ENCODE measurements at regions of chr1 and their contacts with region 1.

Region 1: DNA sequence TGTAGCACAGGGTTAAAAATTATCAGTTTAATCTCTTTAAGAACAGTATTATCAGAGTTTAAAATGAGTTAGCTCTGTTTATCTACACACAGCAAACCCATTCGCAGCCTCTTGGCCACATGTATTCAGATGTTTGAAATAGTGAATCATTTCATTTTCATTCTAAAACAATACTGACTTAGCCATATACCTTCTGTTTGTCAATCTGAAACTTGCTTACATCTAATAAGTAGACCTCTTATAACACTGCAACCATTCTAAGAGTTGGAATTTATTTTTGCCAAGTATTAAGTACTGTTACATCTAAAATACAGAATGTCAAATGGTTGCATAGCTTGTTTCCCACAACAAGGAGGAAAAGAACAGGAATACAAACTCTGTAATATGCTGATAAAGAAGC is 25.4 kb downstream of the ANGEL2 start:
- DNase-seq: no peak
- ATAC-seq: no peak
- H3K4me3 Mint-ChIP-seq: no peak overlapping the region
- H3K27ac Mint-ChIP-seq: no peak overlapping the region
- H3K4me1 Mint-ChIP-seq: peaks cover 8% of the 10 kb centered on the region
- H3K27me3 Mint-ChIP-seq: no peaks in the 10 kb centered on the region

Region 2: GRCh38 chr1:212814537-212815334 is 175.5 kb before region 1 on chr1:
- CTCF ChIA-PET with region 1: interaction called, 17 read pairs
- POLR2A ChIA-PET with region 1: no interaction called
- intact Hi-C with region 1: loop called (anchors 1 to 2 kb)
- DNase-seq: peak; percentile 10
- ATAC-seq: no peak
- H3K4me3 Mint-ChIP-seq: no peak overlapping the region
- H3K27ac Mint-ChIP-seq: no peak overlapping the region
- H3K4me1 Mint-ChIP-seq: peaks cover 3% of the 10 kb centered on the region
- H3K27me3 Mint-ChIP-seq: no peaks in the 10 kb centered on the region

Region 3: DNA sequence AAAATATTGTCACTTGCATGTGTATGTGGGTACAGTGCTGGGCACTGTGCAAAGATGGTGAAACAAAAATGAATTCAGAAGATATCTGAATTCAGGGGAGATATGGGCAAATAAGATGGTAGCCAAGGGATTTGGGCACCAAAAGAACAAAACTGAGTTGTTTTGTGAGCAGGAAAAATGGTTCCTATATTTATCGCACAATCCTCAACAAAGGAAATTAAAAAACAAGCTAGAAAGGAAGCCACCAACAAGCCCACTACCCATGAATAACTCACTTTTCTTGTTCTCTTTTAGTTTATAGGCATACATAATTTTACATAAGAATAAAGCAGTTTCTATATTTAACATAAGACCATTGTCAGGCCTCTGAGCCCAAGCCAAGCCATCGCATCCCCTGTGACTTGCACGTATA is 80.6 kb before region 1 on chr1:
- CTCF ChIA-PET with region 1: no interaction called
- POLR2A ChIA-PET with region 1: no interaction called
- intact Hi-C with region 1: no loop called
- DNase-seq: no peak
- ATAC-seq: no peak
- H3K4me3 Mint-ChIP-seq: no peak overlapping the region
- H3K27ac Mint-ChIP-seq: no peak overlapping the region
- H3K4me1 Mint-ChIP-seq: no peaks in the 10 kb centered on the region
- H3K27me3 Mint-ChIP-seq: no peaks in the 10 kb centered on the region

Region 4: GRCh38 chr1:212920896-212921295 is 69.4 kb before region 1 on chr1:
- CTCF ChIA-PET with region 1: interaction called, 9 read pairs
- POLR2A ChIA-PET with region 1: no interaction called
- intact Hi-C with region 1: loop called in 1 of 2 experiments (anchors 2 kb)
- DNase-seq: peak; percentile 20
- ATAC-seq: peak; percentile 33
- H3K4me3 Mint-ChIP-seq: no peak overlapping the region
- H3K27ac Mint-ChIP-seq: no peak overlapping the region
- H3K4me1 Mint-ChIP-seq: no peaks in the 10 kb centered on the region
- H3K27me3 Mint-ChIP-seq: peaks cover 5% of the 10 kb centered on the region

Region 5: DNA sequence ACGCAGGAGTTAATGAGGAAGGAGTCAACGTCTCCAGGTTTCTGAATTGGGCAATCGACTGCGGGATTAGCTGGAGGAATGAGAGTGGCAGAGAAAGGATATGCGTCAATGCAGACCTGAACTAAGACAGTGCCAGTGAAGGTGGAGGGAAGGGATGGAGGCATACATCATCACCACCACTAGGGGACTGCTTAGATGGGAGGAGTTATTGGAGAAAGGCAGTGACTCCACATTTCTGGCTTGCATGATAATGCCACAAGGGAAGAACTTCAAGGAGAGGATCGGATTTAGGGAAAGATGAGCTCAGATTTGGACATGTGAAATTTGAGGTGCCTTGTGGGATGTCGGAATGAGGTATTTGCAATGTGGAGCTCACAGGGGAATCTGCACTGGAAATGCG is 22.5 kb before region 1 on chr1:
- CTCF ChIA-PET with region 1: interaction called, 23 read pairs
- POLR2A ChIA-PET with region 1: no interaction called
- intact Hi-C with region 1: no loop called
- DNase-seq: peak; percentile 16
- ATAC-seq: peak; percentile 81
- H3K4me3 Mint-ChIP-seq: no peak overlapping the region
- H3K27ac Mint-ChIP-seq: no peak overlapping the region
- H3K4me1 Mint-ChIP-seq: peaks cover 1% of the 10 kb centered on the region
- H3K27me3 Mint-ChIP-seq: peaks cover 10% of the 10 kb centered on the region

Region 6: DNA sequence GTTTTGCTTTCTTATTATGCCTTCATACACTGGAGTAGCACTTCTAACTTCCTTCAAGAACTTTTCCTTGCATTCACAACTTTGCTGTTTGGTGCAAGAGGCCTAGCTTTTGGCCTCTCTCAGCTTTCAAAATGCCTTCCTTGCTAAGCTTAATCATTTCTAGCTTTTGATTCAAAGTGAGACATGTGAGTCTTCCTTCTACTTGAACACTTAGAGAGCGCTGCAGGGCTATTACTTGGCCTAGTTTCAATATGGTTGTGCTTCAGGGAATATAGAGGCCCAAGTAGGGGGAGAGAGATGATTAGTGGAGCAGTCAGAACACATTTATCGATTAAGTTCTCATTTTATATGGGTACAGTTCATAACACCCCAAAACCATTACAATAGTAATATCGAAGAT is 13.0 kb after region 1 on chr1:
- CTCF ChIA-PET with region 1: interaction called, 24 read pairs
- POLR2A ChIA-PET with region 1: interaction called, 3 read pairs
- intact Hi-C with region 1: no loop called
- DNase-seq: peak; percentile 47
- ATAC-seq: peak; percentile 98
- H3K4me3 Mint-ChIP-seq: no peak overlapping the region
- H3K27ac Mint-ChIP-seq: peak overlapping the region; percentile 74
- H3K4me1 Mint-ChIP-seq: peaks cover 12% of the 10 kb centered on the region
- H3K27me3 Mint-ChIP-seq: no peaks in the 10 kb centered on the region

Region 7: DNA sequence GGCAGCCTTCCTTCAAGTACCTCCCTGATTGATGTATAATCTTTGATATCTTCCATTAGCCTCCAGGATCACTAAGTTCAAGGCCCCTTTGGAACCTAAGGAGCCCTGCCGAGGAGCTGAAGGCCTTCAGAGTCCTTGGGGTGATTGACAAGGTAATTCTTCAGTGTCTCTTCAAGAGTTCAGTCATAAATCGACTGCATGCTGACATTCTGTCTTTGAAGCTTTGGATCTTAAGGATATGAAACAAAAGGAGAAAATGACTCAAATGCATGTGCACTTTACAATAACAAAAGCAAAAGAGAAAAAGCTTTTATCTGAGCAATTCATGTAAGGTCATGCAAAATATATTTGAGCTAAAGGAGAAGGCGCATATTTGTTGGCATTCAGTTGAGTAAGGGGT is 186.1 kb after region 1 on chr1:
- CTCF ChIA-PET with region 1: no interaction called
- POLR2A ChIA-PET with region 1: no interaction called
- intact Hi-C with region 1: no loop called
- DNase-seq: no peak
- ATAC-seq: no peak
- H3K4me3 Mint-ChIP-seq: no peak overlapping the region
- H3K27ac Mint-ChIP-seq: no peak overlapping the region
- H3K4me1 Mint-ChIP-seq: no peaks in the 10 kb centered on the region
- H3K27me3 Mint-ChIP-seq: no peaks in the 10 kb centered on the region